CD4-positive, alpha-beta memory T cell (primary cell): ENCODE measurements at regions of chr1 and their contacts with region 1.

Region 1: GRCh38 chr1:22105611-22106207 is 37.2 kb downstream of the WNT4 start:
- DNase-seq: peak; percentile 46 to 62 (median 50)
- H3K4me3 ChIP-seq: no peak overlapping the region
- H3K4me3 Mint-ChIP-seq: peak overlapping the region in 7 of 8 donors; percentile 19 to 86 (median 43)
- H3K27ac ChIP-seq: peak overlapping the region; percentile 30
- H3K27ac Mint-ChIP-seq: peak overlapping the region; percentile 70 to 92 (median 80)
- H3K4me1 ChIP-seq: peaks cover 57% of the 10 kb centered on the region
- H3K4me1 Mint-ChIP-seq: peaks cover 46 to 78% (median 60%) of the 10 kb centered on the region in 4 donors
- H3K27me3 ChIP-seq: no peaks in the 10 kb centered on the region
- H3K27me3 Mint-ChIP-seq: no peaks in the 10 kb centered on the region

Region 2: GRCh38 chr1:22039594-22040285 is 66.0 kb before region 1 on chr1:
- CTCF ChIA-PET with region 1: interaction called, 5 read pairs
- POLR2A ChIA-PET with region 1: interaction called, 11 read pairs
- intact Hi-C with region 1: no loop called
- DNase-seq: peak; percentile 93 to 99 (median 98)
- H3K4me3 ChIP-seq: peak overlapping the region; percentile 24 to 53
- H3K4me3 Mint-ChIP-seq: peak overlapping the region; percentile 78 to 89 (median 84)
- H3K27ac ChIP-seq: peak overlapping the region; percentile 86
- H3K27ac Mint-ChIP-seq: peak overlapping the region; percentile 94 to 100 (median 99)
- H3K4me1 ChIP-seq: peaks cover 75% of the 10 kb centered on the region
- H3K4me1 Mint-ChIP-seq: peaks cover 40 to 76% (median 54%) of the 10 kb centered on the region in 4 donors
- H3K27me3 ChIP-seq: no peaks in the 10 kb centered on the region
- H3K27me3 Mint-ChIP-seq: no peaks in the 10 kb centered on the region

Region 3: GRCh38 chr1:22089787-22090186 is 15.9 kb before region 1 on chr1:
- CTCF ChIA-PET with region 1: interaction called, 16 read pairs
- POLR2A ChIA-PET with region 1: interaction called, 6 read pairs
- intact Hi-C with region 1: loop called (anchors 2 kb)
- DNase-seq: peak in 2 of 5 donors; percentile 12 to 15
- H3K4me3 ChIP-seq: peak overlapping the region in 1 of 2 donors; percentile 6
- H3K4me3 Mint-ChIP-seq: peak overlapping the region; percentile 55 to 83 (median 78)
- H3K27ac ChIP-seq: peak overlapping the region; percentile 22
- H3K27ac Mint-ChIP-seq: peak overlapping the region; percentile 76 to 83 (median 79)
- H3K4me1 ChIP-seq: peaks cover 86% of the 10 kb centered on the region
- H3K4me1 Mint-ChIP-seq: peaks cover 61 to 96% (median 78%) of the 10 kb centered on the region in 4 donors
- H3K27me3 ChIP-seq: no peaks in the 10 kb centered on the region
- H3K27me3 Mint-ChIP-seq: no peaks in the 10 kb centered on the region

Region 4: GRCh38 chr1:22143065-22144036 is 37.6 kb after region 1 on chr1 and contains the start of gene WNT4:
- CTCF ChIA-PET with region 1: no interaction called
- POLR2A ChIA-PET with region 1: no interaction called
- intact Hi-C with region 1: no loop called
- DNase-seq: peak in 3 of 5 donors; percentile 15 to 24 (median 21)
- H3K4me3 ChIP-seq: no peak within 1 kb of the TSS
- H3K4me3 Mint-ChIP-seq: peak within 1 kb of the TSS; percentile 64 to 81 (median 73)
- H3K27ac ChIP-seq: no peak within 1 kb of the TSS
- H3K27ac Mint-ChIP-seq: peak within 1 kb of the TSS in 1 of 7 donors; percentile 64
- H3K4me1 ChIP-seq: no peaks in the 10 kb centered on the region
- H3K4me1 Mint-ChIP-seq: peaks cover 4 to 14% (median 9%) of the 10 kb centered on the region in 4 donors
- H3K27me3 ChIP-seq: peaks cover 13% of the 10 kb centered on the region
- H3K27me3 Mint-ChIP-seq: peaks cover 35 to 36% of the 10 kb centered on the region in 2 donors
- total RNA-seq, gene WNT4: not detected

Region 5: DNA sequence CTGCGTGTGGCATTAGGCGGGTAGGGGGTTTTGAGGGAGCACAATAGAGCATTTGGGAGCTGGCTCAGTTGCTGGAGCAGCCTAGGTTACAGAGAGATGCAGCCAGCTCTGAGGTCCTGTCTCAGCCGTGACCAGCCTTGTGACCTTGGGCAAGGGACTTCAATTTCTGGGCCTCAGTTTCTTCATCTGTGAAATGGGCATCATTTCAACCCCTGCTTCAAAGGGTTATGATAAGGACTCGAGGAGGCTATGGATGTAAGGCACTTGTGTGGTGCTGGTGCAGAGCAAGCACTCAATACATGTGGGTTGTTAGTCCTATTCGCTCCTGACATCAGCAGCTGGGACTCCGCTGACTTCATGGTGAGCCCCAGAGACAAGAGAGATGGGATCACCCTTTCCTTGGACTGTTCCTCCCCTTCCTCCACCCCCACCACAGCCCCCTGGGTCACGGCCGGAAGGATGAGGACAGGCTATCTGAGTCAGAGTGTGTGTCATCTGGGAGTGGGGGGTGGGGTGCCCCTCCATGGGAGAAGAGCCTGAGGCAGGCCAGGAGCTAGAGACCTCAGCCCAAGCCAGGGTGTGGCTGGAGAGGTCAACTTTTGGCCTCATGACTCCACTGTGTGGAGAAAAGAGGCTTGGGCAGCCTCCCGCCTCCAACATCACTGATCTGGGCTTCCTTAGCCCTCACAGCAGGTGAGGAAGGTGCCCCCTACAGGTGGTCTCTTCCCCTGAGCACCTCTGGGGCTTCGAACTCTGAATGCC is 274.5 kb after region 1 on chr1:
- CTCF ChIA-PET with region 1: no interaction called
- POLR2A ChIA-PET with region 1: no interaction called
- intact Hi-C with region 1: no loop called
- DNase-seq: no peak
- H3K4me3 ChIP-seq: no peak overlapping the region
- H3K4me3 Mint-ChIP-seq: no peak overlapping the region
- H3K27ac ChIP-seq: no peak overlapping the region
- H3K27ac Mint-ChIP-seq: no peak overlapping the region
- H3K4me1 ChIP-seq: no peaks in the 10 kb centered on the region
- H3K4me1 Mint-ChIP-seq: no peaks in the 10 kb centered on the region
- H3K27me3 ChIP-seq: peaks cover 4% of the 10 kb centered on the region
- H3K27me3 Mint-ChIP-seq: peaks cover 16 to 23% of the 10 kb centered on the region in 2 donors

Region 6: GRCh38 chr1:22416555-22417454 is 311.1 kb after region 1 on chr1:
- CTCF ChIA-PET with region 1: interaction called, 3 read pairs
- POLR2A ChIA-PET with region 1: no interaction called
- intact Hi-C with region 1: loop called (anchors 5 kb)
- DNase-seq: peak; percentile 55 to 67 (median 60)
- H3K4me3 ChIP-seq: no peak overlapping the region
- H3K4me3 Mint-ChIP-seq: no peak overlapping the region
- H3K27ac ChIP-seq: no peak overlapping the region
- H3K27ac Mint-ChIP-seq: no peak overlapping the region
- H3K4me1 ChIP-seq: no peaks in the 10 kb centered on the region
- H3K4me1 Mint-ChIP-seq: peaks cover 0 to 5% (median 2%) of the 10 kb centered on the region in 4 donors
- H3K27me3 ChIP-seq: peaks cover 4% of the 10 kb centered on the region
- H3K27me3 Mint-ChIP-seq: peaks cover 24 to 41% of the 10 kb centered on the region in 2 donors